PC-9 (cell line): ENCODE measurements at regions of chr2 and their contacts with region 1.

Region 1: GRCh38 chr2:35973132-35973736 is 382.3 kb upstream of the CRIM1 start:
- DNase-seq: peak in 1 of 2 experiments; percentile 9
- H3K4me3 ChIP-seq: no peak overlapping the region
- H3K27ac ChIP-seq: no peak overlapping the region
- H3K4me1 ChIP-seq: no peaks in the 10 kb centered on the region
- H3K27me3 ChIP-seq: no peaks in the 10 kb centered on the region
- CTCF ChIP-seq: peak; percentile 68

Region 2: GRCh38 chr2:36123995-36124394 is 150.8 kb after region 1 on chr2:
- CTCF ChIA-PET with region 1: no interaction called
- POLR2A ChIA-PET with region 1: no interaction called
- intact Hi-C with region 1: no loop called
- DNase-seq: no peak
- H3K4me3 ChIP-seq: no peak overlapping the region
- H3K27ac ChIP-seq: no peak overlapping the region
- H3K4me1 ChIP-seq: no peaks in the 10 kb centered on the region
- H3K27me3 ChIP-seq: no peaks in the 10 kb centered on the region; the same call in 1 of the 2 replicates
- CTCF ChIP-seq: no peak

Region 3: GRCh38 chr2:36253086-36253485 is 279.9 kb after region 1 on chr2:
- CTCF ChIA-PET with region 1: no interaction called
- POLR2A ChIA-PET with region 1: no interaction called
- intact Hi-C with region 1: loop called (anchors 10 kb)
- DNase-seq: no peak
- H3K4me3 ChIP-seq: no peak overlapping the region
- H3K27ac ChIP-seq: no peak overlapping the region
- H3K4me1 ChIP-seq: no peaks in the 10 kb centered on the region
- H3K27me3 ChIP-seq: no peaks in the 10 kb centered on the region
- CTCF ChIP-seq: no peak

Region 4: DNA sequence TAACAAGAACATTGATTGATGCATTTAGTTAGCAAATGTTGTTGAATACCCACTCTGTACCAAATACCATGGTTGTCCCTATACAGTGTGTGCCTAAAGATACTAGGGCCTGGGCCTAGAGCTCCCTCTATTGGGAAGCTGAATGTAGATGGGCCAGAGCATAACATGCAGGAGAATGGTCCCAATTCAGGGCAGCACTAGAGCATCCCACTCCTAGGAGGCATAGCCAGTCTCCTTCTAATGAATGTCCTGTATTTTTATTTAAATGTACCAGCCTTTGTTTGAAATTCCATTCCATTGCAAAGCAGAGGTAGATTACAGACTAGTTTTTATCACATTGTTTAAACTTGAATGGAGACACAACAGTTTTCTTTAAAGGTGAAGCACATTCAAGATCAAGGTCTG is 534.2 kb after region 1 on chr2:
- CTCF ChIA-PET with region 1: no interaction called
- POLR2A ChIA-PET with region 1: no interaction called
- intact Hi-C with region 1: loop called (anchors 5 kb)
- DNase-seq: peak in 1 of 2 experiments; percentile 38
- H3K4me3 ChIP-seq: no peak overlapping the region
- H3K27ac ChIP-seq: no peak overlapping the region
- H3K4me1 ChIP-seq: no peaks in the 10 kb centered on the region
- H3K27me3 ChIP-seq: no peaks in the 10 kb centered on the region
- CTCF ChIP-seq: peak; percentile 87

Region 5: GRCh38 chr2:36672199-36672598 is 699.0 kb after region 1 on chr2:
- CTCF ChIA-PET with region 1: interaction called, 3 read pairs
- POLR2A ChIA-PET with region 1: no interaction called
- intact Hi-C with region 1: loop called (anchors 5 kb)
- DNase-seq: peak in 1 of 2 experiments; percentile 53
- H3K4me3 ChIP-seq: no peak overlapping the region
- H3K27ac ChIP-seq: no peak overlapping the region
- H3K4me1 ChIP-seq: no peaks in the 10 kb centered on the region
- H3K27me3 ChIP-seq: no peaks in the 10 kb centered on the region
- CTCF ChIP-seq: peak; percentile 78